CD4-positive, alpha-beta memory T cell (primary cell): ENCODE measurements at regions of chr6 and their contacts with region 1.

Region 1: DNA sequence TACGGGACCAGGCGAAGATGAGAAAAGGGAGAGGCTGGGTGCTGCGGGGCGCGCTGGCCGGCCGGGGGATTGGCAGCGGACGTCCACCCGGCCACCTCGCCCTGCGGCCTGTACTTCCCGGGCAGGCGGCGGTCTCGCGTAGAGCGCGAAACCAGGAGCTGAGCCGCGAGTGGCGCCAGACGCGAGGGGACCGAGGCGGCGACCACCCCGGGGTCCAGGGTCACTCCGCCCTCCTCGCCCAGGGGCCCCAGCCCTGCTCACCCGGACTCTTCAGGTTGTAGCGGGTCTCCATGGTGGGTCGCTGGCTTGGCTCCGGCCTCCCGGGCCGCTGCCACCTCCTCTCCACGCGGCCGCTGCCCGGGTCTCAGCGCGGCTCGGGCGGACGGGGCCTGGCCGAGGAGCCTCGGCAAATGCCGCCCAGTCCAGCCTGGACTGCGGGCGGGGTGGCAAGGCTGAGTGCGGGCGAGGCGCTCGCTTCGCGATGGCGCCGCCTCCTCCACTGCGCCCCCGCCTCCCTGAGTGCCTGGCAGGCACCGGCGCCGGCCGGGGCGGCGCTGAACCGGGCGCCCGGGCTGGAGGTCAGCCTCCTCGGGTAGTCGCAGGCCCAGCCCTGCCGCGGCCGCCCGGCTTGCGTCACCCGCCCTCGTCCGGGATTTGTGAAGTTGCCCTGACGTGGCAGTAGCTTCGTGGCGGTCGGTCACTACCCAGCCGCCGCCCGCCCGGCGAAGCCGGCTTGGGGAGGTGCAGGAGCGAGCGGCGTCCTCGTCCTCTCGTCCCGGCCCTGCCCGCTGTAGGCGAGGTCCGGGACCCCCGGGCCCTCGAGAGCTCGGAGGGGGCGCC is at the start of gene UBE2J1:
- DNase-seq: peak; percentile 67 to 75 (median 71)
- H3K4me3 ChIP-seq: peak within 1 kb of the TSS; percentile 1 to 90
- H3K4me3 Mint-ChIP-seq: peak within 1 kb of the TSS; percentile 92 to 99 (median 98)
- H3K27ac ChIP-seq: peak within 1 kb of the TSS; percentile 89
- H3K27ac Mint-ChIP-seq: peak within 1 kb of the TSS; percentile 86 to 99 (median 98)
- H3K4me1 ChIP-seq: peaks cover 69% of the 10 kb centered on the region
- H3K4me1 Mint-ChIP-seq: peaks cover 44 to 82% (median 61%) of the 10 kb centered on the region in 4 donors
- H3K27me3 ChIP-seq: no peaks in the 10 kb centered on the region
- H3K27me3 Mint-ChIP-seq: no peaks in the 10 kb centered on the region
- total RNA-seq, gene UBE2J1: 21.9 to 22.6 TPM

Region 2: GRCh38 chr6:88705601-88706000 is 646.9 kb before region 1 on chr6:
- CTCF ChIA-PET with region 1: no interaction called
- POLR2A ChIA-PET with region 1: no interaction called
- intact Hi-C with region 1: no loop called
- DNase-seq: no peak
- H3K4me3 ChIP-seq: no peak overlapping the region
- H3K4me3 Mint-ChIP-seq: no peak overlapping the region
- H3K27ac ChIP-seq: no peak overlapping the region
- H3K27ac Mint-ChIP-seq: peak overlapping the region in 4 of 7 donors; percentile 0 to 56 (median 14)
- H3K4me1 ChIP-seq: no peaks in the 10 kb centered on the region
- H3K4me1 Mint-ChIP-seq: peaks cover 1 to 21% (median 8%) of the 10 kb centered on the region in 4 donors
- H3K27me3 ChIP-seq: no peaks in the 10 kb centered on the region
- H3K27me3 Mint-ChIP-seq: no peaks in the 10 kb centered on the region

Region 3: DNA sequence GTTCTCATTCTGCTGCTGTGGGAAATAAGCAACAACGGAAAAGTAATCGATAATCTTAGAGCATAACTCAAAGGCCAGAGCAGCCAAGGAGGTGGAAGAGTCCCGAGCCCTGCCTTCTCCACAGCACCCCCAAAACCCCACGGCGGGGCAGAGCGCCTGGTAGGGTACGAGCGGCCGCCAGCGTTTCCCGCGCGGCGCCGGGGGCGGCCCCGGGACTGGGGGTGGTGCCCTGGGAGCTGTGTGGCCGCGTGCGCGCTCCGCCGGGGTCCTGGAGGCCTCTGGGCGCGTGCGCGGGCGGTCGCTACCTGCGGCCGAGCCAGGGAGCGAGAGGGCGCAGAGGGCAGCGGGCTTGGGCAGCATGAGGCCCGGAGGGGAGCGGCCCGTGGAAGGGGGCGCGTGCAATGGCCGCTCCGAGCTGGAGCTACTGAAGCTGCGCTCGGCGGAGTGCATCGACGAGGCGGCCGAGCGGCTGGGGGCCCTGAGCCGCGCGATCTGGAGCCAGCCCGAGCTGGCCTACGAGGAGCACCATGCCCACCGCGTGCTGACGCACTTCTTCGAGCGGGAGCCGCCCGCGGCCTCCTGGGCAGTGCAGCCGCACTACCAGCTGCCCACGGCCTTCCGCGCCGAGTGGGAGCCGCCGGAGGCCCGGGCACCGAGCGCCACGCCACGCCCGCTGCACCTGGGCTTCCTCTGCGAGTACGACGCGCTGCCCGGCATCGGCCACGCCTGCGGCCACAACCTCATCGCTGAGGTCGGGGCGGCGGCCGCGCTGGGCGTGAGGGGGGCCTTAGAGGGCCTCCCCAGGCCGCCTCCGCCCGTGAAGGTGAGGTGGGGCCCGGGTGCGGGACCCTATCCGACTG is 206.5 kb before region 1 on chr6 and contains the start of gene PM20D2:
- CTCF ChIA-PET with region 1: no interaction called
- POLR2A ChIA-PET with region 1: interaction called, 15 read pairs
- intact Hi-C with region 1: loop called (anchors 5 kb)
- DNase-seq: peak; percentile 52 to 61 (median 57)
- H3K4me3 ChIP-seq: peak within 1 kb of the TSS; percentile 34 to 44
- H3K4me3 Mint-ChIP-seq: peak within 1 kb of the TSS; percentile 90 to 99 (median 96)
- H3K27ac ChIP-seq: peak within 1 kb of the TSS; percentile 66
- H3K27ac Mint-ChIP-seq: peak within 1 kb of the TSS; percentile 89 to 98 (median 94)
- H3K4me1 ChIP-seq: peaks cover 20% of the 10 kb centered on the region
- H3K4me1 Mint-ChIP-seq: peaks cover 18 to 35% (median 27%) of the 10 kb centered on the region in 4 donors
- H3K27me3 ChIP-seq: no peaks in the 10 kb centered on the region
- H3K27me3 Mint-ChIP-seq: no peaks in the 10 kb centered on the region
- total RNA-seq, gene PM20D2: 11.4 to 11.6 TPM

Region 4: GRCh38 chr6:89281779-89282246 is 70.7 kb before region 1 on chr6:
- CTCF ChIA-PET with region 1: interaction called, 3 read pairs
- POLR2A ChIA-PET with region 1: no interaction called
- intact Hi-C with region 1: loop called (anchors 5 kb)
- DNase-seq: peak; percentile 30 to 52 (median 41)
- H3K4me3 ChIP-seq: no peak overlapping the region
- H3K4me3 Mint-ChIP-seq: no peak overlapping the region
- H3K27ac ChIP-seq: no peak overlapping the region
- H3K27ac Mint-ChIP-seq: peak overlapping the region in 1 of 7 donors; percentile 52
- H3K4me1 ChIP-seq: no peaks in the 10 kb centered on the region
- H3K4me1 Mint-ChIP-seq: peaks cover 0 to 6% (median 3%) of the 10 kb centered on the region in 4 donors
- H3K27me3 ChIP-seq: no peaks in the 10 kb centered on the region
- H3K27me3 Mint-ChIP-seq: peaks cover 0 to 2% of the 10 kb centered on the region in 2 donors

Region 5: GRCh38 chr6:89297695-89298351 is 54.7 kb before region 1 on chr6:
- CTCF ChIA-PET with region 1: interaction called, 17 read pairs
- POLR2A ChIA-PET with region 1: interaction called, 56 read pairs
- intact Hi-C with region 1: loop called (anchors 1 kb)
- DNase-seq: peak; percentile 63 to 89 (median 71)
- H3K4me3 ChIP-seq: peak overlapping the region in 1 of 2 donors; percentile 23
- H3K4me3 Mint-ChIP-seq: peak overlapping the region; percentile 42 to 85 (median 78)
- H3K27ac ChIP-seq: peak overlapping the region; percentile 48
- H3K27ac Mint-ChIP-seq: peak overlapping the region; percentile 96 to 99 (median 97)
- H3K4me1 ChIP-seq: peaks cover 29% of the 10 kb centered on the region
- H3K4me1 Mint-ChIP-seq: peaks cover 18 to 37% (median 22%) of the 10 kb centered on the region in 4 donors
- H3K27me3 ChIP-seq: no peaks in the 10 kb centered on the region
- H3K27me3 Mint-ChIP-seq: no peaks in the 10 kb centered on the region

Region 6: DNA sequence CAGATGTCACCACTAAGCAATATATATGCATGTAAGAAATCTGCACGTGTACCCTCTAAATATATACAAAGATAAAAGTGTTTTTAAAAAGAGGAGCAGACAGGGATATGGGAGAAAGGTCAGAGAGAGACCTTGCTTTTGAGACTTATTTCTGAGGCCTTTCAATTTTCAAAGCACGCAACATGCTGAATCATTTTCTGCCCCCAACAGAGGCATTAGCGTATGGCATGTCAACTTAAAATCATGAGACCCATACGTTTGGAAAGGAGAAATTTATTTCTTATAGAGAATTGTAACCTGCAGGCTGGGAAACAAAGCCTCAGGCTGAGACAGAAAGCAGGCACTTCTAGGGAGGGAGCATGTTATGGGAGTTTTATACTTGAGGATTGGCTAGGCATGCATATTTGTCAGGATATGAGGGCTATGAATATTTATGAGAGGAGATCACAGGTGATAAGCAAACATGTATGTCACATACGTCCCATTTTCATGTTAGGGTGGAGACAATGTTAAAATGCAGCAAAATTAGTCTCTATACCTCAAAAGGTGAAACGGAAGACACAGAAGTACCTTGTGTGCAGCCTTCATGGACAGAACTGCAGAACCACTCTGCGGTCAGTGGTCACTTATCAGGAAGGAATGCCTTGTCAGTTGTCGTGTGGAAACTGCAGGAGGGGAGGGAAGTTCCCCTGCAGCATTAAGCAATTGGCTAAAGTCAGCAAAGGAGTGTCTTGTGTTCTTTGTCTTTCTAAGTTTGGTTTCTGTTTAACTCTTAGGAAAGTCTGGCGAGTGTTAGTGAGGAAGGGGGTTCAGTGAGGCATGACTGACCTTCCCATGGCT is 31.1 kb before region 1 on chr6:
- CTCF ChIA-PET with region 1: no interaction called
- POLR2A ChIA-PET with region 1: no interaction called
- intact Hi-C with region 1: no loop called
- DNase-seq: no peak
- H3K4me3 ChIP-seq: no peak overlapping the region
- H3K4me3 Mint-ChIP-seq: no peak overlapping the region
- H3K27ac ChIP-seq: no peak overlapping the region
- H3K27ac Mint-ChIP-seq: peak overlapping the region in 1 of 7 donors; percentile 26
- H3K4me1 ChIP-seq: no peaks in the 10 kb centered on the region
- H3K4me1 Mint-ChIP-seq: peaks cover 0 to 7% (median 3%) of the 10 kb centered on the region in 4 donors
- H3K27me3 ChIP-seq: no peaks in the 10 kb centered on the region
- H3K27me3 Mint-ChIP-seq: no peaks in the 10 kb centered on the region

Region 7: GRCh38 chr6:89339565-89339964 is 12.9 kb before region 1 on chr6:
- CTCF ChIA-PET with region 1: interaction called, 17 read pairs
- POLR2A ChIA-PET with region 1: interaction called, 9 read pairs
- intact Hi-C with region 1: no loop called
- DNase-seq: no peak
- H3K4me3 ChIP-seq: no peak overlapping the region
- H3K4me3 Mint-ChIP-seq: no peak overlapping the region
- H3K27ac ChIP-seq: no peak overlapping the region
- H3K27ac Mint-ChIP-seq: no peak overlapping the region
- H3K4me1 ChIP-seq: no peaks in the 10 kb centered on the region
- H3K4me1 Mint-ChIP-seq: peaks cover 4 to 7% (median 6%) of the 10 kb centered on the region in 4 donors
- H3K27me3 ChIP-seq: no peaks in the 10 kb centered on the region
- H3K27me3 Mint-ChIP-seq: no peaks in the 10 kb centered on the region